ENCODE measurements at regions of chr22 and their contacts with region 1.

Region 1: DNA sequence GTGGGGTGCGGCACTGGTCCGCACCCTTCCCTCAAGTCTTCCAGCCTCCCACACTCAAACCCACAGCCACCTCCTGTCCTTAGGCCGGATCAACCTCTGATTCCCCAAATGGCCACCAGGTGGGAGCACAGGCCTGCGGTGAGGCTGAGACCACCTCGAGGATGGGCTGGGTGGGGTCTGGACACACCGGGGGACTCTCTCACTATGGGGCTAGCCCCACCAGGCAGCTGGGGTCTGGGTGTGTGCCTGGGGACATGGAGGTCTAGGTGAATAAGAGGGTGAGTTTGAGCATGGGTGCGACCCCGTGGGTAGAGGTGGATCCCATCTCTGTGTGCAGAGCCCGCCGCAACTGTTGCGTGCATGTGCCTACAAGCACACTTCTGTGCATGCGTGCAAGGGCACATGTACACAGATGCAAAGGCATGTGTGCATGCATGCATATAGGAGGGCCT is 32.6 kb downstream of the MYO18B start:
- DNase-seq: no peak
- ATAC-seq: no peak
- H3K4me3 ChIP-seq: no peak overlapping the region
- H3K27ac ChIP-seq: no peak overlapping the region
- H3K4me1 ChIP-seq: no peaks in the 10 kb centered on the region
- H3K27me3 ChIP-seq: no peaks in the 10 kb centered on the region

Region 2: GRCh38 chr22:25465949-25466348 is 308.7 kb before region 1 on chr22:
- intact Hi-C with region 1: loop called (anchors 2 kb)
- DNase-seq: no peak
- ATAC-seq: no peak
- H3K4me3 ChIP-seq: no peak overlapping the region
- H3K27ac ChIP-seq: no peak overlapping the region
- H3K4me1 ChIP-seq: no peaks in the 10 kb centered on the region
- H3K27me3 ChIP-seq: no peaks in the 10 kb centered on the region

Region 3: GRCh38 chr22:25702040-25702439 is 72.6 kb before region 1 on chr22:
- intact Hi-C with region 1: loop called (anchors 5 kb)
- DNase-seq: no peak
- ATAC-seq: no peak
- H3K4me3 ChIP-seq: no peak overlapping the region
- H3K27ac ChIP-seq: no peak overlapping the region
- H3K4me1 ChIP-seq: no peaks in the 10 kb centered on the region
- H3K27me3 ChIP-seq: no peaks in the 10 kb centered on the region

Region 4: DNA sequence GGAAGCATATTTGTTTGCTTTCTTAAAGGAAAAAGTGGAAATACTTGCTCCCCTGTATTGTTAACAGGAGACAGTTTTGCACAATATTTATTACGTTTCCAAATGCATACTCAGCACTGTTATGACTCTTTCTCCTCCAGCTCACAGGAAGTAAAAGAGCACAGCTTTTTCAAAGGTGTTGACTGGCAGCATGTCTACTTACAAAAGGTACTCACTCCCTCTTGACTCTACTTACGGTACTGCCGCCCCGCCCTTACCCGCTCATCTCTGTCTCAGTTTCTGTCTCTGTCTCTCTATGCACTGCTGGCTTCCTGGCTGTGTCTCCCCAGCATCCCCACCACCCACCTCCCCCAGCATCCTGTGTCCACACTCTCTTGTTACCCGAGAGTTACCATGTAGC is 64.8 kb before region 1 on chr22:
- intact Hi-C with region 1: loop called (anchors 5 kb)
- DNase-seq: no peak
- ATAC-seq: no peak
- H3K4me3 ChIP-seq: no peak overlapping the region
- H3K27ac ChIP-seq: no peak overlapping the region
- H3K4me1 ChIP-seq: no peaks in the 10 kb centered on the region
- H3K27me3 ChIP-seq: no peaks in the 10 kb centered on the region

Region 5: GRCh38 chr22:25718135-25718840 is 56.3 kb before region 1 on chr22:
- intact Hi-C with region 1: loop called in 1 of 2 experiments (anchors 5 kb)
- DNase-seq: no peak
- ATAC-seq: no peak
- H3K4me3 ChIP-seq: no peak overlapping the region
- H3K27ac ChIP-seq: peak overlapping the region in 1 of 2 donors; percentile 22
- H3K4me1 ChIP-seq: peaks cover 0 to 2% of the 10 kb centered on the region in 2 donors
- H3K27me3 ChIP-seq: no peaks in the 10 kb centered on the region